ENCODE measurements at regions of chr1 and their contacts with region 1.

Region 1: GRCh38 chr1:151534665-151535278 is 5.3 kb upstream of the TUFT1 start:
- DNase-seq: peak; percentile 82 to 93
- ATAC-seq: peak; percentile 77
- H3K4me3 ChIP-seq: no peak overlapping the region
- H3K27ac ChIP-seq: no peak overlapping the region
- H3K4me1 ChIP-seq: no peaks in the 10 kb centered on the region
- H3K27me3 ChIP-seq: no peaks in the 10 kb centered on the region

Region 2: DNA sequence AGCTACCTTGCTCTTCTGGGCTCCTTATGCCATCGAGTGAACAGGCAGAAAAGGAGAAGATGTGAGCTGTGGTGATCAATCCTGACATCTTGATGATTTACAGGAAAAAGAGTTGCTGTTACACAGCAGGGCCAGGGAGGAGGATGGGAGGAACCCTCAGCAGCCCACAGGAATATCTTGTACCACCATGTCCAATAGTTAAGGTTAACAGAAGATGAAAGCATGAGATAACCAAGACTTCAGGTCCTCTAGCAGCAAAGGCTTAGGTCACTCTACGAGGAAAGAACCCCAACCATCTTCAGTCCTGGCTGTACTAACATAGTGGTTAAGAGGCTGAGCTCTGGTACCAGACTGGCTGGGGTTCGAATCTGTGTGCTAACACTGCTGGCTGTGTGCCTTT is 150.2 kb before region 1 on chr1:
- intact Hi-C with region 1: no loop called
- DNase-seq: no peak
- ATAC-seq: no peak
- H3K4me3 ChIP-seq: no peak overlapping the region
- H3K27ac ChIP-seq: no peak overlapping the region
- H3K4me1 ChIP-seq: no peaks in the 10 kb centered on the region
- H3K27me3 ChIP-seq: no peaks in the 10 kb centered on the region

Region 3: DNA sequence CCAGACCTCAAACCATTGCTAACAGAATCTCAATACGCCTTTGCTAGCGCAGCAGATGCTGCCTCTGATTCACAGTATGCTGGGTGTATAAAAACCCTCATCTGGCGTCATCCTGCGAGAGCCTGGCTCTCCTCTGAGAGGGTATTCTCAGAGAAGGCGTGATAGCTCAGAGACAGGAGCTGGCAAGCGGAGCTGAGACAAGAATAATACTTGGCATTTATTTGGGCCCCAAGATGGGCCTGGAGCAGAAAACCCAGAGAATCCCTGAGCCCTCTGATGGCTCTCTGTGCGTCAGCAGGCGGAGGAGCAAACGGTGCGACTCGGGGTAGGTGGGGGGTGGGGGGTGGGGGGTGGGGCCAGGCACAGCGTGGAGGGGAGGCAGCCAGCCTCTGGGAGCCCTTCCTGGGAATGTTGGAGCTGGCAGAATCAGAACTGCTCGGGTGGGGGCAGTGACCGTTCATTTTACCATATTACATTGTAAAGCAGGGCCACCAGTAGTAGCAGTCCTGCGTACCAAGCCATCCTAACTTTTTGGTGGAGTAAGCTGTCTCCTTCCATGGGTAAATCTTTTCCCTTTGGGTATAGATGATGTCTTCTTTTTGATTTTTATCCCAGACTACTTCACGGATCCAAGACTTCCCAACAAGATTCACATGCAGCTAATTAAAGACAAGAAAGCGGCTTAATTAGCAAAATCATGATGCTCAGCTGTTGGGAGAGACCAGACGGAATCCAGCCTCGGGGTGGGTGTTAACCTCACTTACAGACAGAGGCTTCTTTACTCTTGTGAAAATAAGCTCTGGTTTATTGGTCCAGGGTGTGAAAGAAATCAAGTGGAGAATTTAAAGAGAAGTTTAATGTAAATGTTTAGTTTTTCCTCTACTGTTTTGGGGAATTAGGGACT is 193.6 kb after region 1 on chr1:
- intact Hi-C with region 1: loop called in 1 of 2 experiments (anchors 5 kb)
- DNase-seq: no peak
- ATAC-seq: peak; percentile 77
- H3K4me3 ChIP-seq: peak overlapping the region in 1 of 2 donors; percentile 14
- H3K27ac ChIP-seq: peak overlapping the region in 1 of 2 donors; percentile 32
- H3K4me1 ChIP-seq: no peaks in the 10 kb centered on the region
- H3K27me3 ChIP-seq: no peaks in the 10 kb centered on the region

Region 4: DNA sequence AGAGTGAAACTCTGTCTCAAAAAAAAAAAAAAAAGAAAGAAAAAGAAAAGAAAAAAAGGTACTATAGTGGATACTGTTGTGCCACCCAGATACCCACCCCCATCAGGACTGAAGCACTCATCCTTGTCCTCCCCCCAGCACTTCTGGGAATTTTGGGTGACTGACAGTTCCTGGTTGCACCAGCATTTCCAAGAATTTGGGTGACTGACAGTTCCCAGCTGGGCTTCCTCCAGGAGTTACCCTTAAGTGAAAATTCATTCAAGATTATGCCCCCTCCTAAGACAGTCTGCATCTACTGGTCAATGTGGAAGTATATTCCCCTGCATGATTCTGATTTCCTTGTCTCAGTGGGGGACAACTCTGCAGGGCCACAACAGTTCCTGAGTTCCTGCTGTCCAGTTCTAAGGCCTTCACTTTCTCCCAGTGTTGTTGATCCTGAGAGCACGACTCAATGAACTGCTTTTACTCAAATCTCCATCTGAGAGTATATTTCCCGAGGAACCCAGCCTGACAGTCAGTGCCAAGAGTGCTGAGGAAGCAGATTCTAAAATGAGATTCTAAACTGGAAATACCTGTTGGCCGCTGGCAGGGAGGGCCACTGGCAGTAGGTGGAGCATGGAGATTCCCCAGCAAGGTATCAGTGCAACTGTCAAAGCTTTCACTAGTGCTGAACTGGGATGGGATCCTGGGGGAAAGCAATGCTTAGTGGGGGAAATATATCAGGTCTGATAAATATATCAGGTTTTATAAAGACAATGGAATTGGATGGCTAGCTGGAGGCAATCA is 205.0 kb after region 1 on chr1:
- intact Hi-C with region 1: loop called (anchors 2 to 5 kb)
- DNase-seq: no peak
- ATAC-seq: no peak
- H3K4me3 ChIP-seq: no peak overlapping the region
- H3K27ac ChIP-seq: no peak overlapping the region
- H3K4me1 ChIP-seq: no peaks in the 10 kb centered on the region
- H3K27me3 ChIP-seq: no peaks in the 10 kb centered on the region